ENCODE measurements at regions of chr12 and their contacts with region 1.

Region 1: DNA sequence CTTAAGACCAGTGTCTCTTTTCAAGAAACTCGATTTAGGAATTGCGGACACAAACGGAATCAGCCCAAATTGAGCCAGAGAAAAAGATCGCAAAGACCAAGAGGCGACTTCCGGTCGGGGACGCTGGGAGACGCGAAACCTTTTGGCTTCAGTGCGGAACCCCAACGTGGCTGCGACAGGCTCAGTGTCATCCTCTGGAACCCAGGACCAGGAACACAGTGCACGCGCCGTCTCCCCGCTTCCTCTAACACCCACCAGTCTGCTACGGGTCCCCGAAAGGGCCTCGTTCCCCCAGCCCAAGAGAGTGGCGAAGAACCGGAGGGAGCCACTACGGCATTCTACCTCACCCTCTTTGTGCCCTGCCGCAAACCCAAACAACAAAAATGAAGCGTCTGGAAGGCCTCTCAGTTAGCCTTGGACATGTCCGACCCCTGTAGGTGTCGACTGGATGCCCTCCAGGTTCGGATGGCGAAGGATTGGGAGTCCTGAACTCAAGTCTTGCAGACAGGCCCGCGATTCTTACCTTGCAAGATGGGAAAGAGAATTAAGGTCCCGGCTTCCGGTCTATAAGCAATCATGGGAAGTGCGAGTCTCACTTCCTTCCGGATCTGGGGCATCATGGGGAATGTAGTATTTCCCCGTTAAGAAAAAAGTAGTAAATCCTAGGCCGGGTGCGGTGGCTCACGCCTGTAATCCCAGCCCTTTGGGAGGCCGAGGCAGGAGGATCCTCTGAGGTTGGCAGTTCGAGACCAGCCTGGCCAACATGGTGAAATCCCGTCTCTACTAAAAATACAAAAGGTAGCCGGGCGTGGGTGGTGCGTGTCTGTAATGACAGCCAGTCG is at the start of gene RPL6:
- DNase-seq: peak; percentile 82
- H3K4me3 Mint-ChIP-seq: peak within 1 kb of the TSS; percentile 99
- H3K27ac Mint-ChIP-seq: peak within 1 kb of the TSS; percentile 100
- H3K4me1 Mint-ChIP-seq: peaks cover 36% of the 10 kb centered on the region
- H3K27me3 Mint-ChIP-seq: no peaks in the 10 kb centered on the region
- CTCF ChIP-seq: no peak
- total RNA-seq, gene RPL6: 1,147 and 1,267 TPM in 2 replicates

Region 2: DNA sequence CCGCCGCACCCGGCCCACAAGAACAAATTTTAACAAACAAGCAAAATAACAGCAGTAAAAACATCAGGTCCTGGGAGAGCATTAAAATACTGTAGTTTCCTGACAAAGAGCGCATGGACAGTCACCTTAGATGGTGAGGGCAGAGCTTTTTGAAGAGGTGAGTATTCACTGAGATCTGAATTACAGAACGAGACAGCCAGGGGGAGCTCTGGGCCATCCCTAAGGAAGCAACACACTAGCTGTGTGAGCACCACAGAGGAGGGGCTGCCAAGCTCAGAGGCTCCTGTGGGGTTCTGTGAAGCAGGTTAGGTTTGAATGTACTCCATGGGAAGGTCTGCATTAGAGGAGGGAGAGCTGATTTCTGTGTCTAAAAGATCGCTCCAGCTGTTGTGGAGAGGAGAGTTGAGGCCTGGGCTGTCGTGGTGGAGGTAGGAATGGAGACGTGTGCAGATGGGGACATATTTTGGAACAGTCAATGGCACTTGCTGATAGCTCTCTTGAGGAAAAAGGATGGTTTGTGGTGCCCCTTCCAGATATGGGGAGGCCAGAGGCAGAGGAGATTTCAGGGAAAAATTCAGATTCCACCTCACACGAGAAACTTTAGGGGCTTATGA is 211.1 kb before region 1 on chr12:
- CTCF ChIA-PET with region 1: interaction called, 5 read pairs
- intact Hi-C with region 1: loop called (anchors 1 kb)
- DNase-seq: peak; percentile 74
- H3K4me3 Mint-ChIP-seq: no peak overlapping the region
- H3K27ac Mint-ChIP-seq: no peak overlapping the region
- H3K4me1 Mint-ChIP-seq: no peaks in the 10 kb centered on the region
- H3K27me3 Mint-ChIP-seq: no peaks in the 10 kb centered on the region
- CTCF ChIP-seq: peak; percentile 58